Activated naive CD8-positive, alpha-beta T cell treated with anti-CD3 and anti-CD28 coated beads, Interleukin-2, amount 10 ng/mL, durations not matched to agents 7 days and 5 days (primary cell): ENCODE measurements at regions of chr19 and their contacts with region 1.

Region 1: DNA sequence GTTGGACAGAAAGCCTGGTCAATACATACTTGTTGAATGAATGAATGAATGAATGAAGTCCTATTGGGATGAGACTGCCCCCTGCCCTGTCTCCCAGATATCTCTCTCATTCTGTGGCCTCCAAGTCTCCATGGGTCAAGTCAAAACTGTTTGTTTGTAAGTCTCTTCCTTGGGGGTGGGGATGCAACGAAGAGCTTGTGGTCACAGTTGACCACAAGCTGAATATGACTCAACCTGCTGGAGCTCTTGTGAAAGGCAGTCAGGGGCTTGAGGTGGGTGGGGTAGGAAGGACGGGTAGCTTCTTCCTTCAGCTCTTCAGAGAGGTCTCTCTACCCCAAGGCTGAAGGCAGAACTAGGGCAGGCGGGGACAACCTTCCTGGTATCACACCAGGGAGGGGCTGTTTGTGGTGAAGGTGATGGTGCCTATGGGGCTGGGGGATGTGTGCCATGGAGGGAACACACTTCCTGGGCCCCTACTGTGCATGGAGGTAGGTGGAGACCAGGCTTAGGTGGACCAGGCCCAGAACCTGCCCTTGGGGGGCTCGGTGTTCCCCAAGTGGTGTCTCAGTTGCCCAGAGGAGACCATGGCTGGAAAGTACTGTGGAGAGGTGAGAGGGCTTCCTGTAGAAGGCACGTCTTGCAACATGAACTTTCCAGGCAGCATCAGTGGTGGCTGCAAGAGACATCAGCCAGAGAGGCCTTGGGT is 8.0 kb downstream of the MYO1F start:
- DNase-seq: peak; percentile 72
- ATAC-seq: peak; percentile 91
- H3K4me3 Mint-ChIP-seq: peak overlapping the region; percentile 83
- H3K27ac Mint-ChIP-seq: peak overlapping the region; percentile 97
- H3K4me1 Mint-ChIP-seq: peaks cover 62% of the 10 kb centered on the region
- H3K27me3 Mint-ChIP-seq: no peaks in the 10 kb centered on the region

Region 2: DNA sequence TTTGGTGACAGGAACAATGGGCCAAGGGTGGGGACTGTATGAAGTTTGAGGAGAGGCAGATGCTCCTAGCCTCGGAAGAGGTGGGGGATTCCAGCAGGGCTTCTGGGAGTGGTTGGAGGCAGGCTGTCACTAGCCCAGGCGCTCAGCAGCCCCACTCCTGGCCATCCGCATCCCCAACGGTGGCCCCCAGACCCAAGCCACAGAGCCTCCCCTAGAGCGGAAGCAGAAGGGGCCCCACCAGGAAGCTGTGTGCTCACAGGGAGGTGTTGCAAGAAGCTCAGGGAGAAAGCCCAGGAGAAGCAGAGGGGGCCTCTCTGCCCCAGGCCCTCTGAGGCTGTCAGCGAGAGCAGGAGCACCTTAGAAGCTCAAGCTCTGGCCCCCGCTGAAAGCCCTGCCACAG is 75.1 kb before region 1 on chr19:
- POLR2A ChIA-PET with region 1: interaction called, 13 read pairs
- DNase-seq: peak; percentile 58
- ATAC-seq: peak; percentile 79
- H3K4me3 Mint-ChIP-seq: peak overlapping the region; percentile 40
- H3K27ac Mint-ChIP-seq: peak overlapping the region; percentile 83
- H3K4me1 Mint-ChIP-seq: peaks cover 18% of the 10 kb centered on the region
- H3K27me3 Mint-ChIP-seq: no peaks in the 10 kb centered on the region

Region 3: GRCh38 chr19:8580710-8581281 is 11.6 kb after region 1 on chr19:
- POLR2A ChIA-PET with region 1: interaction called, 17 read pairs
- DNase-seq: peak; percentile 92
- ATAC-seq: peak; percentile 48
- H3K4me3 Mint-ChIP-seq: no peak overlapping the region
- H3K27ac Mint-ChIP-seq: no peak overlapping the region
- H3K4me1 Mint-ChIP-seq: peaks cover 13% of the 10 kb centered on the region
- H3K27me3 Mint-ChIP-seq: peaks cover 2% of the 10 kb centered on the region